ENCODE measurements at regions of chr6 and their contacts with region 1.

Region 1: DNA sequence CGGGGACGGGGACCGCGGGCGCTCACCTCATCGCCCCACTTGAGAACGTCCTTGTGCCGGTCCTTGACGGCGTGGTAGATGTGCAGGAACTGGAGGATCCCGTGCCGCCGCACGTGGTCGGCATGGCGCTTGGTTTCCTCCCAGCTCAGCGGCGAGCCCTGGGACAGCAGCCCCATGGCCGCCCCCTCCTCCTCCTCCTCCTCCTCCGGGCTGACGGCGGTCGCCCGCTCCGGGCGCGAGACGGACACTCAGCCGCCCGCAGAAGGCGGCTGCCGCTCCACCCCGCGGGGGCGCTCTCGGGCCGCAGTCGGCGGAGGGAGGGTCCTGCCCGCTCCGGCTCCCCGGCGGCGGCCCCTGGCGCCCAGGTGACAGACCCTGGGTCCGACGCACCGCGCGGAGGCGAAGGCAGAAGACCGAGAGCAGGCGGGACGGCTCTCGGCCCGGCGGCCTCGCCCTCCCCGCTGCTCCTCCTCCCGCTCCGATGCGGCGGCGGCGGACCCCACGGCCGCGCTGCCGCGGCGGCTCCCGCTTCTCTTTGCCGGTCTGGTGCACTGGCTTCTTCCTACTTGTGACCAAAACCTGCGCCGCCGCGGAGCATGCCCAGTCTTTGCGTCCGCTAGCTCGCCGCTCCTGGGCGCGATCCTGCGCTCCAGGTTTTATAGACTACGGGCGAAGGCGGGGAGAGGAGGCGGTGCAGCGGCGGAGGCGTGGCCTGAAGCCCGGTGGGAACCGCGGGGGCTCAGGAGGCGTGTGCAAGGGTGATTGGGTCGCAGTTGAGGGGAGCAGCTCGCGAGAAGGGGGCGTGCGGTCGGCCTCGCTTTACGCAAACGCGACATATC is at the start of gene GCLC:
- DNase-seq: peak; percentile 95
- ATAC-seq: peak; percentile 80 to 88 (median 83)
- H3K4me3 ChIP-seq: peak within 1 kb of the TSS; percentile 55 to 94 (median 82)
- H3K27ac ChIP-seq: peak within 1 kb of the TSS; percentile 46 to 99 (median 95)
- H3K4me1 ChIP-seq: peaks cover 0 to 56% (median 42%) of the 10 kb centered on the region in 9 donors
- H3K27me3 ChIP-seq: no peaks in the 10 kb centered on the region
- CTCF ChIP-seq: peak; percentile 49 to 88 (median 70)
- total RNA-seq, gene GCLC: 13.9 to 42.8 (median 34.6) TPM

Region 2: DNA sequence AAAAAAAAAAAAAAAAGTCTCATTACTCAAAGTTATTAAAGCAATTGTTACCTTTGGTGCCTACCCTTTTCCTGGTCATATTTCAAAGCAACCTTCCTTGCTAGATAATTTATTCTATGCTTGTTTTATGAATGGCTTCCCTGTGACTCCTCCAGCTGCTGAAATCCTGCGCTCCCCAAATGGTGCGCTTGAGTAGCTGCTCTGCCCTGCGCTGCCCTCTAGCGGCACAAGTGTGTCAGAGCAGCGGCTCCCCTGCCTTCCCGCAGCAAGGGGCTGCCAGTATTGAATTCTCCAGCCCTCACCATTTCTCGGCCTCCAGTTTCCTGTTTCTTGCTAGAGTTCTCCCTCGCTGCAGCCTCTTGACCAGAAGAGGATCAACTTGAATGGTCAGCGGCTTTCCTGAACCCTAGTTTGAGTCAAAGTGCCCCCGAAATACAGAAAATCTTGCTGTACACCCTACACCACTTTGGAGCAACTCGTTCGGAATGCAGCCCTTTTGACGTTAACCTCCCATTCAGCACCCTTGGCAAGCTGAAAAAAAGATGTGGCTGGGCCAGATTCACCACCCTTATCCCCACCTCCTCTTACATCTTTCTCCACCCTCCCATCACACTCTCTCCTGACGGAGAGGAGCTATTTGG is 181.2 kb after region 1 on chr6:
- intact Hi-C with region 1: loop called in 1 of 10 experiments (anchors 10 kb)
- DNase-seq: peak; percentile 76 to 79
- ATAC-seq: peak; percentile 79 to 93 (median 89)
- H3K4me3 ChIP-seq: no peak overlapping the region
- H3K27ac ChIP-seq: no peak overlapping the region
- H3K4me1 ChIP-seq: peaks cover 0 to 10% (median 0%) of the 10 kb centered on the region in 9 donors
- H3K27me3 ChIP-seq: peaks cover 0 to 6% (median 0%) of the 10 kb centered on the region in 7 donors
- CTCF ChIP-seq: peak; percentile 90 to 97 (median 95)